Left ventricle myocardium inferior (tissue), 1 donor: ENCODE measurements at regions of chr1 and their contacts with region 1.

Region 1: GRCh38 chr1:100277866-100278265 is 11.8 kb downstream of the RTCA start:
- DNase-seq: no peak
- H3K4me3 ChIP-seq: no peak overlapping the region
- H3K27ac ChIP-seq: no peak overlapping the region
- H3K4me1 ChIP-seq: peaks cover 31% of the 10 kb centered on the region
- H3K27me3 ChIP-seq: no peaks in the 10 kb centered on the region
- CTCF ChIP-seq: no peak

Region 2: GRCh38 chr1:100132566-100133477 is 145.0 kb before region 1 on chr1 and contains the starts of genes SASS6 and TRMT13:
- intact Hi-C with region 1: loop called (anchors 10 kb)
- DNase-seq: peak; percentile 96
- H3K4me3 ChIP-seq: peak within 1 kb of the TSS; percentile 86
- H3K27ac ChIP-seq: peak within 1 kb of the TSS; percentile 79
- H3K4me1 ChIP-seq: peaks cover 36% of the 10 kb centered on the region
- H3K27me3 ChIP-seq: no peaks in the 10 kb centered on the region
- CTCF ChIP-seq: no peak
- total RNA-seq, gene SASS6: 2.1 TPM
- total RNA-seq, gene TRMT13: 7.5 TPM

Region 3: DNA sequence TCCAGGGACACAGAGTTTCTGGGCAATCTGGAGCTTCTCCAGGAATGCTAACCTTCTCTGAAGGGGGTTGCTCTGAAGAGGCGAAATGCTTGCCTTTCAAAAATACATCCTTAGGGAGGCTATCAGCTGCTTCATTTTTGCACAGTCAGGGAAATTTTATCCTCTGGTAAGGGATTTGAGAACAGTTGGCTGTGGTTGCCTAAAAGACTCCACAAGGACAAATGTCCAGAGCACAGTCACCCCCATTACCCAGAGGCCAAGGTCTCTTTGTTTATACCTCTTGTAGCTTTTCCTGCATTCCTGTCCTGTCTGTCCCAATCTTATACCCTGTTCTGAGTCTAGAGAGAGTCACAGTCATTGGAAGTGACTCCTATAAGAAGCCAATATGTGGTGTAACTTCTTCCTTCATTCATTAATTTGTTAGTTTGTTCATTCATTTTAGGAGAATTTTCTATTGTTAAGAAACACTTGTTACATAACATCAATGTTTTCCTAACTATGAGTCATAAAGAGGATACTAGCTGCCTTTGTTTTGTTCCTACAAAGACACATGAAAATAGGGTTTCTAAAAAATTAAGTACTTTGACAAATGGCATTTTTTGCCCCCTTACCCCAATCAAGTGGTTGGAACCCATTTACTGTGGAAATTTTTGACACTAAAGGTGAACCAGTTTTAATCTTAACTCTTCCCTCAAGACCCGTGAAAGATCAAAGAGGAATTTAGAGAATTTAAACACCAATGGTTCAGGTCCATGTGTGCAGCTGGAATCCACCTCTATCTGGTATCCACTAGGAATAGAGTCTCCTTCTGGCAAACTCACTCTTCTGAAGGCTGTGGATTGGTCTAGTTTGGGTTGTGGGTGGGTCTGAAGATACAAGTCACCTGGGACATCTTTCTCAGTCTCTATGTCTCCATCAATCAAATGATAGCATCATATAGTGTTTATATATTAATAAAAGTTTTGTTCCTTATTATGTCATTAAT is 307.2 kb after region 1 on chr1:
- intact Hi-C with region 1: no loop called
- DNase-seq: no peak
- H3K4me3 ChIP-seq: no peak overlapping the region
- H3K27ac ChIP-seq: no peak overlapping the region
- H3K4me1 ChIP-seq: peaks cover 24% of the 10 kb centered on the region
- H3K27me3 ChIP-seq: no peaks in the 10 kb centered on the region
- CTCF ChIP-seq: no peak